Dendritic cell treated with granulocyte-macrophage colony-stimulating factor and Interleukin-4, amounts not matched to agents 40 ng/mL and 50 ng/mL, for 4 days (primary cell): ENCODE measurements at regions of chr12 and their contacts with region 1.

Region 1: DNA sequence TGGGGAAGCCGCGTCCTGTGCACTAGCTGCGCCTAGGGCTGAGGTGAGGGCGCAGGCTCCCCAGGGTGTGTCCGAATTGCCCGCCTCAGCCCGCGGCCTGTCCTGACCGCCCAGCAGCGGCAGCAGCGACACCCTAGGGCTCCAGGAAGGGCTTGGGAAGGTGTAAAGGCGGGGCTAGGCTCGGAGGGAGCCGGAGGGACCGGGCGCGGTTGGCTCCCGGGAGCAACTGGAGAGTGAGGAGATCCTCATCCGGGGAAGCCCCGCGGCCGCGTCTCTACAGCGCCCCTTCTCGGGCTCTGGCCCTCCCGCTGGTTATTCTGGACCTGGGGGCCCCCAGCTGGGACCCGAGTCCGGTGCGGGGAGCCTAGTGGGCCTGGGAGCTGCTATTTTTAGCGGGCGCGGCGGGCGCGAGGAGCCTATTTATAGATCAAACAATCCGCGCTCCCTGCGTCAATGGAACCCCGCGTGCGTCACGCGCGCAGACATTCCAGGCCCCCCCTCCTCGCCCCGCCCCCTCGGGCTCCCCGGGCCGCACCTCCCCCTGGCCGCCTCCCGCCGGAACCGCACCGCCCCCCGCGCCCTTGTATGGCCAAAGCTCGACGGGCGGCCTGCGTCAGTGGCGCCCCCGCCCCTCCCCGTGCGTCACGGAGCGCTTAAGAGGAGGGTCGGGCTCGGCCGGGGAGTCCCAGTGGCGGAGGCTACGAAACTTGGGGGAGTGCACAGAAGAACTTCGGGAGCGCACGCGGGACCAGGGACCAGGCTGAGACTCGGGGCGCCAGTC is at the start of gene NR4A1:
- H3K4me3 Mint-ChIP-seq: peak within 1 kb of the TSS; percentile 81
- H3K27ac Mint-ChIP-seq: peak within 1 kb of the TSS; percentile 89
- H3K4me1 Mint-ChIP-seq: peaks cover 50% of the 10 kb centered on the region
- H3K27me3 Mint-ChIP-seq: peaks cover 36% of the 10 kb centered on the region

Region 2: GRCh38 chr12:52032804-52033502 is 18.0 kb before region 1 on chr12:
- intact Hi-C with region 1: loop called (anchors 1 kb)
- H3K4me3 Mint-ChIP-seq: peak overlapping the region; percentile 60
- H3K27ac Mint-ChIP-seq: peak overlapping the region; percentile 81
- H3K4me1 Mint-ChIP-seq: peaks cover 37% of the 10 kb centered on the region
- H3K27me3 Mint-ChIP-seq: peaks cover 35% of the 10 kb centered on the region

Region 3: DNA sequence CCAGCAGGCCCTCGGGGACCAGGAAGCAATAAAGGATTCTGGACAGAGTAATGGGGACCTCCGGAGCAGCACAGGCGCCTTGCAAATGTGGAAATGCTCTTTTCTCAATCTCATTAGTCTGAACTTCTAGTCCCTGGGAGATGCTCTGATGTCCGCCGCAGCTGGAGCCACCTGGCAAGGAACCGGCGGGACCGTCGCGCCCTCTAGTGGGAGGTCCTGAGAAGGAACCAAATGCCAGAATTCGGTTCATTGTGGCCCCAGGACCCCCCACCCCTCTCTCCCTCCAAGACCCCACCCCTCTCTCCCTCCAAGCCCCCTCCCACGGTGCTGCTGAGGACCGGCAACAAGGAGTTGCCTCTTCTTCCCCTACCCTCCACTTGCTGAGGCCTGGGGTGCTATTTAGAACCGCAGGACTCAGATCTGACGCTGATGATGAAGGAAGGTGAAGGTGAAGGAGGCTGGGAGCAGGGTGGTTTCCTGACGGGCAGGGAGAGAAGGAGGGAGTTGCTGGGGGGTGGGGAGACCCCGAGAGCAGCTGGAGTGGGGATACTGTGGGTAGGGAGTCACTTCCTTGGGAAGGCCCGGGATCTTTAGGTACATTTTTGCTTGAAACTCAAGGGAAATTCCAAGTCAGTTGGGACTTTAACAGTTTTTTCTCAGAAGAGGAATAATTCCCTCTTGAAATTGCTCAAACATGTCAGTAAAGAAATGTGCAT is 71.0 kb after region 1 on chr12:
- intact Hi-C with region 1: no loop called
- H3K4me3 Mint-ChIP-seq: no peak overlapping the region
- H3K27ac Mint-ChIP-seq: peak overlapping the region; percentile 48
- H3K4me1 Mint-ChIP-seq: peaks cover 48% of the 10 kb centered on the region
- H3K27me3 Mint-ChIP-seq: peaks cover 53% of the 10 kb centered on the region